ENCODE measurements at regions of chr1 and their contacts with region 1.

Region 1: DNA sequence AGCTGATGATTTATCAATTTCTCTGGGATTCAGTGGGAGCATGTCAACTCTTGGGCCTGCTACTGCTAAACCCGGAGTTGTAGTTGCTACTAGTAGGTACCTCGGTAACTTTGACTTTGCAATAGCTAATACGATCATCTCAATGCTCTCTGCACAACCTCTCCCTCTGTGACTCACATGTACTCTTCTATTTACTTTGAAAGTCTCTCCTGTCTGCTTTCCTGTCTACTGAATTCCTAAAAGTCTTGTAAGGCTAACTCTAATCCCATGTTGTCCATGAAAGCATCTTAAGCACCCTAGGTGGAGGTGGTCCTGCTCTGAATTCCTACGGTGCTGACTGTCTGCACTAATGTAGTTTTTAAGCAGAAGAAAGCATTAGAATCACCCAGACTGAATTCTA is 29.3 kb downstream of the SLC9C2 start:
- DNase-seq: peak; percentile 88
- ATAC-seq: peak; percentile 97
- H3K4me3 ChIP-seq: no peak overlapping the region
- H3K27ac ChIP-seq: no peak overlapping the region
- H3K4me1 ChIP-seq: peaks cover 10% of the 10 kb centered on the region
- H3K27me3 ChIP-seq: no peaks in the 10 kb centered on the region
- CTCF ChIP-seq: no peak

Region 2: GRCh38 chr1:173429471-173430402 is 143.9 kb before region 1 on chr1:
- CTCF ChIA-PET with region 1: no interaction called
- POLR2A ChIA-PET with region 1: no interaction called
- intact Hi-C with region 1: no loop called
- DNase-seq: peak; percentile 100
- ATAC-seq: peak; percentile 83
- H3K4me3 ChIP-seq: peak overlapping the region; percentile 47
- H3K27ac ChIP-seq: peak overlapping the region; percentile 71
- H3K4me1 ChIP-seq: peaks cover 71% of the 10 kb centered on the region
- H3K27me3 ChIP-seq: no peaks in the 10 kb centered on the region
- CTCF ChIP-seq: peak; percentile 96

Region 3: DNA sequence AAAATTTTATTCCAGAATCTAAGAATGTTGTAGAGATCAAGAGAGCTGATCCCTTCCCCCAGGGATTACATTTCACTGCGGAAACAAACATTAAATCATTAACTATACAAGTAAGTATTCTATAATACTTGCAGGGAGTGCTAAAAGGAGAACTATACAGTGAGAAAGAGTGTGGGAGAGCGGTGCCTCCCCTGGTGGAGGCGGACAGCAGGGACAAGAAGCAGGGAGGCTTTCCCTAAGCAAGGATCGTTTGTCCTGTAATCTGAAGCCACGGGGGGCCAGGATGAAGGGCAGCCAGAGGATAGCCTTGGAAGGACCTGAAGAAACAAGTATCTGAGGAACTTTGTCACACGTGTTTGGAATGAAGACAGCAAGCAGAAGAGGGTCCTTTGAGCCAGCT is 10.8 kb before region 1 on chr1:
- CTCF ChIA-PET with region 1: no interaction called
- POLR2A ChIA-PET with region 1: no interaction called
- intact Hi-C with region 1: loop called (anchors 1 kb)
- DNase-seq: peak; percentile 53
- ATAC-seq: peak; percentile 85
- H3K4me3 ChIP-seq: no peak overlapping the region
- H3K27ac ChIP-seq: no peak overlapping the region
- H3K4me1 ChIP-seq: no peaks in the 10 kb centered on the region
- H3K27me3 ChIP-seq: no peaks in the 10 kb centered on the region
- CTCF ChIP-seq: peak; percentile 55

Region 4: DNA sequence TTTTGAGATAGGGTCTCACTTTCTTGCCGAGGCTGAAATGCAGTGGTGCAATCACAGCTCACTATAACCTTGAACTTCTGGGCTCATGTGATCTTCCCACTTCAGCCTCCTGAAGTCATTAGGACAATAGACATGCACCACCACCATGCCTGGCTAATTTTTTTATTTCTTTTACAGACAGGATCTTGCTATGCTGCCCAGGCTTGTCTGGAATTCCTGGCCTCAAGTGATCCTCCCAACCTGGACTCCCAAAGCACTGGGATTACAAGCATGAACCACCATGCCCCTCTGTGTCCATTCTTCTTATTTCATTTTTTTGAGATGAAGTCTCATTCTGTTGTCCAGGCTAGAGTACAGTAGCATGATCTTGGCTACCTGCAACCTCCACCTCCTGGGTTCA is 129.1 kb after region 1 on chr1:
- CTCF ChIA-PET with region 1: no interaction called
- POLR2A ChIA-PET with region 1: no interaction called
- intact Hi-C with region 1: no loop called
- DNase-seq: no peak
- ATAC-seq: no peak
- H3K4me3 ChIP-seq: no peak overlapping the region
- H3K27ac ChIP-seq: no peak overlapping the region
- H3K4me1 ChIP-seq: no peaks in the 10 kb centered on the region
- H3K27me3 ChIP-seq: no peaks in the 10 kb centered on the region
- CTCF ChIP-seq: no peak

Measured in PC-3 (cell line).